PC-9 (cell line): ENCODE measurements at regions of chr1 and their contacts with region 1.

Region 1: DNA sequence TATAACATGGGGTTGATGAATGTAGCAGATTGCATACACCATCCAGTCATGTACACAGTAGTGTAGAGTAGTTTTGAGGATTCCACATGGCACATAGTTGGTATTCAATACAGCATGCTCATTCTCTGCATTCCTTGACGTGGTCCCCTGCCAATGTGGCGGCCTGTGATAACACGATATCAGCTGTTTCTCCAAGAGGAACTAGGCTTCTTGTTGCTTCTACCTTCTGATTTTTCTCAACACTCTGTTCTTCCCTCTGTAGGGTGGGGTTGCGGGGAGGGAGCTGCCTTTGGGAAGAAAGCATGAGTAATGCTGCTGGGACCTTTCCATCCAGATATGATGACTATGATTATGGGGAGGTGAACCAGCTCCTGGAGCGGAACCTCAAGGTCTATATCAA is 19.4 kb downstream of the SESN2 start:
- DNase-seq: no peak
- H3K4me3 ChIP-seq: no peak overlapping the region
- H3K27ac ChIP-seq: no peak overlapping the region
- H3K4me1 ChIP-seq: no peaks in the 10 kb centered on the region
- H3K27me3 ChIP-seq: no peaks in the 10 kb centered on the region
- CTCF ChIP-seq: no peak

Region 2: DNA sequence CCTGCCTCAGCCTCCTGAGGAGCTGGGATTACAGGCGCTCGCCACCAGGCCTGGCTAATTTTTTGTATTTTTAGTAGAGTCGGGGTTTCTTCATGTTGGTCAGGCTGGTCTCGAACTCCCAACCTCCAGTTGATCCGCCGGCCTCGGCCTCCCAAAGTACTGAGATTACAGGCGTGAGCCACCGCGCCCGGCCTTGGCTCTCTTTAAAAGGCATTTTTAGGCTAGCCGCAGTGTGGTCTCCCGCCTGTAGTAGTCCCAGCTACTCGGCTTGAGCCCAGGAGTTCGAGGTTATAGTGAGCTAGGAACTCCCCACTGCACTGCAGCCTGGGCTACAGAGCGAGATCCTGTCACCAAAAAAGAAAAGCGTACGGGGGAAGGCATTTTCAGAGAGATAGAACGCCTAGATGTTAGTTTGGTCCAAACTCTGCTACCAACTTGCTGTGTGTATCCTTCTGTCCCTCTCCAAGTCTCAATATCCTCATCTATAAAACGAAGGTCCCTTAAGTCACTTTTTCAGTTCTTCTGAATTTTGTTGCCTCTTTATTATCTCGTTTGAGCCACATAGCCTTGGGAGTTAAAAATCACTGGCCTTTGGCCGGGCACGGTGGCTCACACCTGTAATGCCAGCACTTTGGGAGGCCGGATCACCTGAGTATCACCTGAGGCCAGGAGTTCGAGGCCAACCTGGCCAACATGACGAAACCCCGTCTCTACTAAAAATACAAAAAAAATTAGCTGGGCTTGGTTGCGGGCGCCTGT is 50.8 kb after region 1 on chr1:
- CTCF ChIA-PET with region 1: no interaction called
- POLR2A ChIA-PET with region 1: interaction called, 38 read pairs
- intact Hi-C with region 1: no loop called
- DNase-seq: no peak
- H3K4me3 ChIP-seq: peak overlapping the region; percentile 80
- H3K27ac ChIP-seq: peak overlapping the region; percentile 91
- H3K4me1 ChIP-seq: peaks cover 14% of the 10 kb centered on the region
- H3K27me3 ChIP-seq: no peaks in the 10 kb centered on the region
- CTCF ChIP-seq: no peak